ENCODE measurements at regions of chr7 and their contacts with region 1.

Region 1: DNA sequence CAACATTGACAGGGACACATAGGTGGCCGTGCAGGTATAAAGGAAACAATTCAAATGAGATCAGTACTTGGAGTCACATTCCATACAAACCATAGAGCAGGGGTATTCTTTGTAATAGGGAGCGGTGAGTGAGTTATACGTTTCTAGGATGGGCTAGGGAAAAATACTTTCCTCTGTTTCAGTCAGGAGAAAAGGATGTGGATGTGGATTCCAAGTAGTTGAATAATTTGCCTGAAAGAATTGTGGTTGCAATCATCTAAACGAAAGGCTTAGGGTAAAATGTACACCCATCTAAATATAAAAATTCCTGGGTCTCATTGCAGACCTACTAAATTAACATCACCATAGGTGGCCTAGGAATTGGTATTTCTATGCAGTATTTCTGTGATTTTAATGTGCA is 270.7 kb upstream of the IGFBP3 start:
- DNase-seq: peak; percentile 62 to 93
- H3K4me3 ChIP-seq: no peak overlapping the region
- H3K27ac ChIP-seq: peak overlapping the region; percentile 88
- H3K4me1 ChIP-seq: peaks cover 25% of the 10 kb centered on the region
- H3K27me3 ChIP-seq: no peaks in the 10 kb centered on the region
- CTCF ChIP-seq: no peak

Region 2: GRCh38 chr7:44622307-44623151 is 1569.2 kb before region 1 on chr7:
- CTCF ChIA-PET with region 1: no interaction called
- POLR2A ChIA-PET with region 1: no interaction called
- intact Hi-C with region 1: no loop called
- DNase-seq: peak in 1 of 2 experiments; percentile 21
- H3K4me3 ChIP-seq: no peak overlapping the region
- H3K27ac ChIP-seq: peak overlapping the region; percentile 87; the same call in 1 of the 2 replicates
- H3K4me1 ChIP-seq: peaks cover 53% of the 10 kb centered on the region
- H3K27me3 ChIP-seq: no peaks in the 10 kb centered on the region
- CTCF ChIP-seq: no peak

Region 3: DNA sequence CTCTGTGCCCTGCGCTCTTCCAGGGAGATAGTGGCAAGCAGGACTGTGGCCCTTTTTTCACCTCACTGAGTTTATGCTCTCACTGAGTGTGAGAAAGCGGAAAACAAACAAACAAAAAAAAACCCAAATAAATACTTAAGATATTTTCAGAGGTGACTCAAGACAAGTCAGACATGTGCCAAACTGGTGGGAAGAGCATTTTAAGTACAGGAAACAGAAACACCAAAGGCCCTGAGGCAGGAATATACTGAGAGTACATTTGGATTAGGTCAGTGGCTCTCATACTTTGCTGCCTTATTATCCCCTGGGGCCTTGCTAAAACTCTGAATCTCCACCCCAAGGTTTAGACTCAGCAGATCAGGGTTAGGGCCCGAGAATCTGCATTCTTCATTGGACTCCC is 158.8 kb before region 1 on chr7:
- CTCF ChIA-PET with region 1: no interaction called
- POLR2A ChIA-PET with region 1: no interaction called
- intact Hi-C with region 1: loop called (anchors 1 kb)
- DNase-seq: peak; percentile 54 to 99
- H3K4me3 ChIP-seq: no peak overlapping the region; the same call in 1 of the 2 replicates
- H3K27ac ChIP-seq: peak overlapping the region; percentile 92
- H3K4me1 ChIP-seq: peaks cover 58% of the 10 kb centered on the region
- H3K27me3 ChIP-seq: no peaks in the 10 kb centered on the region
- CTCF ChIP-seq: no peak

Region 4: DNA sequence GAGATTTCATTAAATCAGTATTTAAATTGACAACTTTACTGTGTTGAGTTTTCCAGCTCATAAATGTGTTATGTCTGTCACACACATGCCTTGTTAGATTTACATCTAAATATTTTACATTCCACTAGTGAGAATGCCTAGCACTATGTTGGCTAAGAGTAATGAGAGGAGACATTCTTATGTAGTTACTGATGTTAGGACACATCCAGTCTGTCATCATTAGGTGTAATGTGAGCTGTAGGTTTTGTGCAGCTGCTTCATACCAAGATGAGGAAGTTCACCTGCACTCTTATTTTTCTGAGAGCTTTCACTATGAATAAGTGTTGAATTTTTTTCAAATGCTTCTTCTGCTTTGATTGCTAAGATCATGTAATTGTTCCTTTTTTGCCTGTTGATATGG is 52.7 kb before region 1 on chr7:
- CTCF ChIA-PET with region 1: no interaction called
- POLR2A ChIA-PET with region 1: no interaction called
- intact Hi-C with region 1: loop called (anchors 1 kb)
- DNase-seq: peak; percentile 40 to 100
- H3K4me3 ChIP-seq: no peak overlapping the region
- H3K27ac ChIP-seq: peak overlapping the region; percentile 83
- H3K4me1 ChIP-seq: peaks cover 29% of the 10 kb centered on the region
- H3K27me3 ChIP-seq: no peaks in the 10 kb centered on the region
- CTCF ChIP-seq: no peak

Region 5: GRCh38 chr7:46215987-46216567 is 24.3 kb after region 1 on chr7:
- CTCF ChIA-PET with region 1: no interaction called
- POLR2A ChIA-PET with region 1: no interaction called
- intact Hi-C with region 1: loop called (anchors 1 kb)
- DNase-seq: no peak
- H3K4me3 ChIP-seq: no peak overlapping the region
- H3K27ac ChIP-seq: no peak overlapping the region
- H3K4me1 ChIP-seq: peaks cover 22% of the 10 kb centered on the region
- H3K27me3 ChIP-seq: no peaks in the 10 kb centered on the region
- CTCF ChIP-seq: no peak

Region 6: DNA sequence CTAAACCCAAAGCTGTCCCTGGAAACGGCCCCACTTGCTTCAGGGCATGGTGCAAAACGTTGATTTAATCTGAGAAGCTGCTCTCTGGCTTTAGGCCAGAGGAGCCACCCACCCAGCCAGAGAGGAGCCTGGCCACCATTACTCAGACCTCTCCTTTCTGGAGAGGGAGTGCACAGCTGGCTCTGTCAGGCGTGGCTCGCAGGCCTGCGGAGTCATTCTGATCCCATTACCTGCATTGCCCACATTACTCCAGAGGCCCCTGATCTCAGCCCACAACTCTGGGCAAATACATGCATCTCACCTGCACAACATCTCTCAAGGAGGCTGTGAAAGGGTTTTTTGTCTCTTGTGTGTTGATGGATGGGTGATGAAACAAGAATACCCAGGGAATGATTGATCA is 99.3 kb after region 1 on chr7:
- CTCF ChIA-PET with region 1: no interaction called
- POLR2A ChIA-PET with region 1: interaction called, 5 read pairs
- intact Hi-C with region 1: loop called (anchors 1 kb)
- DNase-seq: peak; percentile 72 to 83
- H3K4me3 ChIP-seq: no peak overlapping the region
- H3K27ac ChIP-seq: peak overlapping the region; percentile 77
- H3K4me1 ChIP-seq: peaks cover 30% of the 10 kb centered on the region
- H3K27me3 ChIP-seq: no peaks in the 10 kb centered on the region
- CTCF ChIP-seq: no peak

Region 7: DNA sequence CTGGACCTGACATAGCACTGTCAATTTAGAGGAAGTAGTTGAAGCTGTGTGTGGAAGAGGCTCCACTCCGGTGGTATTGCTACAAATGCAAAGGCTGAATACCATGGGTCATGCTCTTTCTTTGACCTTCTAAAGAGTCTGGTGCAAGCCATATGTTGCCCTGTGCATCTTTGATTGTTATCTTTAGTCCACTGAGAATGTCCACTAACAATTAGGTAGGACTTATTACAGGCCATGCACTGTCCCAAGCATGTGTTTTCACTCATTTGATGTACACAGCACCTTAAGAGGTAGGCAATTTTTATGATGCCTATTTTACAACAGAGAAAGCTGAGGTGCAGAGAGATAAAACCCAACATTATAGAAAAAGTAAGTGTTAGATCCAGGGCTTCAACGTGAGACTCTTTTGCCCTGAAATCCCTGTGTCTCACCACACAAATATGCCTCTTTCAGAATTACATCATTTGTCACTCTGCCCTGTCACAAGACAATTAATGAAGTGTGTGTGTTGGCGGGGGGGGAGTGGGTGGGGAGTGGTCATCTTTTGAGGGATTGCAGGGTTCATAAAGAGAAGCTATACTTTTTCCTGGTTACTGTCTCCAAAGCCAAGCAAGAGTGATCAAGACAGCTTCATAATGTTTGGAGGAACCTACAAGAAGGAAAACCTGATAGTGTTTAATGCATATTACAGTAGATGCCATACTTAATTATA is 366.9 kb after region 1 on chr7:
- CTCF ChIA-PET with region 1: no interaction called
- POLR2A ChIA-PET with region 1: no interaction called
- intact Hi-C with region 1: loop called (anchors 5 kb)
- DNase-seq: peak; percentile 45 to 87
- H3K4me3 ChIP-seq: peak overlapping the region; percentile 21; the same call in 1 of the 2 replicates
- H3K27ac ChIP-seq: peak overlapping the region; percentile 93
- H3K4me1 ChIP-seq: peaks cover 34% of the 10 kb centered on the region
- H3K27me3 ChIP-seq: no peaks in the 10 kb centered on the region
- CTCF ChIP-seq: no peak

Measured in PC-9 (cell line).